ENCODE measurements at regions of chr1 and their contacts with region 1.

Region 1: GRCh38 chr1:231337472-231338269 is at the start of gene EXOC8:
- DNase-seq: peak; percentile 97
- H3K4me3 ChIP-seq: peak within 1 kb of the TSS; percentile 97
- H3K27ac ChIP-seq: peak within 1 kb of the TSS; percentile 95
- H3K4me1 ChIP-seq: peaks cover 13% of the 10 kb centered on the region
- H3K27me3 ChIP-seq: no peaks in the 10 kb centered on the region
- CTCF ChIP-seq: no peak
- total RNA-seq, gene EXOC8: 13.2 to 14.9 TPM

Region 2: DNA sequence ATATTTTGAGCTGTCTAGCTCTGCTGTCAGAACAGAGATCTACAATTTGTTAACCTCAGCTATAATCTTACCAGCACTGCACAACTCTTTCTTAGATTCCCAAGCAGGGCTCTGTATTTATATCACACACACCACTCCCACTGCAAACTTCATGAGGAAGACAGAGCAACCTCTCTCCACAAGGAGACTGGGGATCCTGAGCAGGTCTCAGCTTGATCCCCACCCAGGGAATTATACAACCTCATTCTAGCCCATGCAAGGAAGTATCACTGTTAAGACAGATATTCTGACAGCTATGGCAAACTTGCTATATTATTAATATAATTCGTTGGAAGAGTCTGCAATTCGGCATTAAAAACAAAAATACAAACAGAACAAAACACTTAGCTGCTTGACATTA is 44.1 kb after region 1 on chr1:
- intact Hi-C with region 1: loop called (anchors 2 kb)
- DNase-seq: no peak
- H3K4me3 ChIP-seq: no peak overlapping the region
- H3K27ac ChIP-seq: no peak overlapping the region
- H3K4me1 ChIP-seq: no peaks in the 10 kb centered on the region
- H3K27me3 ChIP-seq: no peaks in the 10 kb centered on the region
- CTCF ChIP-seq: no peak

Measured in colonic mucosa (tissue), 4 donors.